ENCODE measurements at regions of chr20 and their contacts with region 1.

Region 1: DNA sequence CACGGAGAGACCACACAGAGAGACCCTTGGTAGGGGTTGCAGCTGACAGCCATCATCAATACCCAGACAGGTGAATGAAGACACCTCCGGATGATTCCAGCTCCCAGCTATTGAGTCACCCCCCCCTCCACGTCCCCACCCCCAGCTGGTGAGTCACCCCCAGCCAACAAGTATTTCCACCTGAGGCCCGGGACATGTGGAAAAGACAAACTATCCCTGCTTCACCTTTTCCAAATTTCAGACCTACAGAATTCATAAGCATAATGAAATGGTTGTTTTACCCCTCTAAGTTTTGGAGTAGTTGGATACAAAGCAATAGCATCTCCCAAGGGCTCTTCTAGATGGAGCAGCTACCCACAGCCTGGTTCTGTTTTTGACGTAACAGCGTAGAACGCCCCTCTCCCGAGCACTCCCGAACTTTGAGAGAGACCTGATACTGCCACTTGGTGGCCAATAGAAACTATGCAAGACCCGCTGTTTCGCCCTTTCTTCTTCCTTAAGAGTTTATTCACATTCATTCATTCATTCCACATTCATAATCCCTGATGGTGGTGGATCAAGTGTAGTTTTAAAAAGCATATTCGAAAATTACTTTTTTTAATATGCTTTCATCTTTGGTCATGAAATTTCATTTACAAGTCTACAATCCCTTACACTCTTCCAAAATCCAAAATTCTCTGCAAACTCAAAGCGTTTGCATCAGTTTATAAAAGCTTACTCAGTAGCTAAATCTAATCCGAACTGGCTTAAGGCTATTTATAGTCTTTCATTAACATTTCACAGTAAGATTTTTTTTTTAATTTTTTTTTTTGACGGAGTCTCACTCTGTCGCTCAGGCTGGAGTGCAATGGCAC is 15.1 kb upstream of the PPP1R16B start:
- DNase-seq: peak; percentile 71
- ATAC-seq: peak; percentile 81
- H3K4me3 Mint-ChIP-seq: no peak overlapping the region
- H3K27ac Mint-ChIP-seq: no peak overlapping the region
- H3K4me1 Mint-ChIP-seq: peaks cover 12% of the 10 kb centered on the region
- H3K27me3 Mint-ChIP-seq: no peaks in the 10 kb centered on the region

Region 2: GRCh38 chr20:38645980-38646858 is 144.2 kb before region 1 on chr20:
- CTCF ChIA-PET with region 1: interaction called, 17 read pairs
- DNase-seq: peak; percentile 90
- ATAC-seq: peak; percentile 98
- H3K4me3 Mint-ChIP-seq: peak overlapping the region; percentile 61
- H3K27ac Mint-ChIP-seq: peak overlapping the region; percentile 17
- H3K4me1 Mint-ChIP-seq: peaks cover 9% of the 10 kb centered on the region
- H3K27me3 Mint-ChIP-seq: peaks cover 37% of the 10 kb centered on the region

Region 3: GRCh38 chr20:38764567-38765355 is 25.7 kb before region 1 on chr20:
- CTCF ChIA-PET with region 1: interaction called, 20 read pairs
- DNase-seq: no peak
- ATAC-seq: peak; percentile 69
- H3K4me3 Mint-ChIP-seq: no peak overlapping the region
- H3K27ac Mint-ChIP-seq: no peak overlapping the region
- H3K4me1 Mint-ChIP-seq: peaks cover 9% of the 10 kb centered on the region
- H3K27me3 Mint-ChIP-seq: no peaks in the 10 kb centered on the region

Region 4: GRCh38 chr20:38805502-38805957 is 15.1 kb after region 1 on chr20 and contains the start of gene PPP1R16B:
- CTCF ChIA-PET with region 1: interaction called, 29 read pairs
- DNase-seq: peak; percentile 93
- ATAC-seq: peak; percentile 86
- H3K4me3 Mint-ChIP-seq: peak within 1 kb of the TSS; percentile 88
- H3K27ac Mint-ChIP-seq: peak within 1 kb of the TSS; percentile 98
- H3K4me1 Mint-ChIP-seq: peaks cover 57% of the 10 kb centered on the region
- H3K27me3 Mint-ChIP-seq: no peaks in the 10 kb centered on the region
- total RNA-seq, gene PPP1R16B: 86.5 to 128 TPM

Region 5: DNA sequence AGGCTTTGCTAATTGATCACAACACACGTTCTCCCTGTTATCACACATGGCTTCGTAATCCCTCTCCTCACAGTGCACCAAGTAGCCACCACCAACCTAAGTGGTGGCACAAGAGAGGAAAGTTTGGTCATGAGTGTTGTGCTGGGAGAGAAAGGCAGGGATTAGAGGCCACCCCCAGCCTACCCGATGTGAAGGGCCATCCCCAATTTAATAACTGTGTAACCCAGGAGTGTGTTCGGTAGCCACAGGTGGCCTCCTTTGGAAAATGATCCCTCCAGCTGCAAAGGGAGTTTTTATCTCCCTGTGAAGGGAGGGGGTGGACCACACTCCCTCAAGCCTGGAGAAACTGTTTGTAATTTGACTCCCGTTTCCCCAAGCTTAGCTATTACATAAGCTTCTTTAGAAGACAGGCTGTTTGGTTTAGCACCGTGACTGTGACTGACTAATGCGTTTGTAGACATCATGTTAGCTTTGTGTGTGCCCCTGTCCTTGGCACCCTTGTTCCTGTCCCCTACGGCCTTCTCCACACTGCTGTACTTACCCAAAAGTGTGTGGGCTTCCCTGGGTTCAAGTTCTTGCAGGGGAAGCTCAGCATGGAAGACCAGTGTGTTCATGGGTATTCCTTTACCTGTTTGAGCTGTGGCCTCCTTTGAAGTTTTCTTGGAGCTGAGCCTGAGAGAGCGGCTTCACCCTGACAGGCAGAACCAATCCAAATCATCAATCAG is 35.6 kb after region 1 on chr20:
- CTCF ChIA-PET with region 1: no interaction called
- DNase-seq: peak; percentile 34
- ATAC-seq: no peak
- H3K4me3 Mint-ChIP-seq: no peak overlapping the region
- H3K27ac Mint-ChIP-seq: no peak overlapping the region
- H3K4me1 Mint-ChIP-seq: peaks cover 75% of the 10 kb centered on the region
- H3K27me3 Mint-ChIP-seq: no peaks in the 10 kb centered on the region

Region 6: GRCh38 chr20:38962044-38962927 is 171.9 kb after region 1 on chr20 and contains the start of gene DHX35:
- CTCF ChIA-PET with region 1: interaction called, 10 read pairs
- DNase-seq: peak; percentile 99
- ATAC-seq: peak; percentile 99
- H3K4me3 Mint-ChIP-seq: peak within 1 kb of the TSS; percentile 87
- H3K27ac Mint-ChIP-seq: peak within 1 kb of the TSS; percentile 97
- H3K4me1 Mint-ChIP-seq: peaks cover 29% of the 10 kb centered on the region
- H3K27me3 Mint-ChIP-seq: no peaks in the 10 kb centered on the region
- total RNA-seq, gene DHX35: 10.5 to 12.9 TPM

Measured in activated CD8-positive, alpha-beta memory T cell treated with anti-CD3 and anti-CD28 coated beads, Interleukin-2, amount 10 ng/mL, durations not matched to agents 7 days and 5 days (primary cell).